Testis (tissue), 5 donors: ENCODE measurements at regions of chr3 and their contacts with region 1.

Region 1: GRCh38 chr3:4722103-4722502 is 229.0 kb downstream of the ITPR1 start:
- DNase-seq: peak; percentile 69
- H3K4me3 ChIP-seq: no peak overlapping the region
- H3K27ac ChIP-seq: peak overlapping the region; percentile 23 to 58
- H3K4me1 ChIP-seq: peaks cover 41% of the 10 kb centered on the region
- H3K27me3 ChIP-seq: no peaks in the 10 kb centered on the region
- CTCF ChIP-seq: peak in 2 of 3 experiments; percentile 36 to 44
- POLR2A ChIP-seq: no peak

Region 2: GRCh38 chr3:4376499-4376898 is 345.6 kb before region 1 on chr3:
- intact Hi-C with region 1: no loop called
- DNase-seq: no peak
- H3K4me3 ChIP-seq: no peak overlapping the region
- H3K27ac ChIP-seq: no peak overlapping the region
- H3K4me1 ChIP-seq: no peaks in the 10 kb centered on the region
- H3K27me3 ChIP-seq: no peaks in the 10 kb centered on the region
- CTCF ChIP-seq: no peak
- POLR2A ChIP-seq: no peak

Region 3: DNA sequence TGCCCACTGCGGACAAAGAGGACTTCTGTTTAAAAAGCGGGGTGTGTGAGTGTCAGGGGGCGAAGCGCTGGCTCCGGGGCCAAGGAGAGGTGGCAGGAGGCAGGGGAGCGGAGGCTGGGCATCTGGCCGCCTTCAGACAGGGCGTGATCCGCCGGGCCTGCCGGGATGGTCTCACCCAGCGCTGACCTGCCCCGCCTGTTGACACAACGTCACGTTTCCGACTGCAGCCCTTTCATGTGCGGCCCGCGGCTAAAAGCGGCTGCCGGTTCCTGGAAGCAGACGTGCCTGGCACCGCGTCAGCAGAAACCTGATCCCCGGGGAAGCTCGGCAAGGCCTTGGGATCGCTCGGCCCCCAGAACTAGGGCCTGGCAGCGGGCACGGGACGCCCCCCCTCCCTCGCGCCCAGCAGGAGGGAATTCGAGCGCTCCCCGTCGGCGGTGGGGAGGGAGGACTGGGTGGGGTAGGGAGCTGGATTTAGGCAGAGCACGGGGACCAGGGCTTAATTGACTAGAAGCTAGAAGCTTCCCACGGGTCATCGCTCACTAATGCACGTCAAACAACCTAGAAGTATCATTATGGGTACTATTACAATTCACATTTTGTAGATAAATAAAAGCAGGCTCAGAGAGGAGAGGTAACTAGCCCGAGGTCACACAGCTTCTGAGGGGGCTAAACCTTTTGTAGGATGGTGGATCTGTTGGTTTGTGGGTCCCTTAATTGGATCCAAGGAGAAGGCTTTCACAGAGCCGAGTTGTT is 264.9 kb after region 1 on chr3:
- intact Hi-C with region 1: loop called (anchors 10 kb)
- DNase-seq: peak; percentile 93
- H3K4me3 ChIP-seq: peak overlapping the region; percentile 51 to 62
- H3K27ac ChIP-seq: peak overlapping the region; percentile 76 to 89
- H3K4me1 ChIP-seq: peaks cover 46% of the 10 kb centered on the region
- H3K27me3 ChIP-seq: no peaks in the 10 kb centered on the region
- CTCF ChIP-seq: no peak
- POLR2A ChIP-seq: no peak